H1 (cell line): ENCODE measurements at regions of chr2 and their contacts with region 1.

Region 1: DNA sequence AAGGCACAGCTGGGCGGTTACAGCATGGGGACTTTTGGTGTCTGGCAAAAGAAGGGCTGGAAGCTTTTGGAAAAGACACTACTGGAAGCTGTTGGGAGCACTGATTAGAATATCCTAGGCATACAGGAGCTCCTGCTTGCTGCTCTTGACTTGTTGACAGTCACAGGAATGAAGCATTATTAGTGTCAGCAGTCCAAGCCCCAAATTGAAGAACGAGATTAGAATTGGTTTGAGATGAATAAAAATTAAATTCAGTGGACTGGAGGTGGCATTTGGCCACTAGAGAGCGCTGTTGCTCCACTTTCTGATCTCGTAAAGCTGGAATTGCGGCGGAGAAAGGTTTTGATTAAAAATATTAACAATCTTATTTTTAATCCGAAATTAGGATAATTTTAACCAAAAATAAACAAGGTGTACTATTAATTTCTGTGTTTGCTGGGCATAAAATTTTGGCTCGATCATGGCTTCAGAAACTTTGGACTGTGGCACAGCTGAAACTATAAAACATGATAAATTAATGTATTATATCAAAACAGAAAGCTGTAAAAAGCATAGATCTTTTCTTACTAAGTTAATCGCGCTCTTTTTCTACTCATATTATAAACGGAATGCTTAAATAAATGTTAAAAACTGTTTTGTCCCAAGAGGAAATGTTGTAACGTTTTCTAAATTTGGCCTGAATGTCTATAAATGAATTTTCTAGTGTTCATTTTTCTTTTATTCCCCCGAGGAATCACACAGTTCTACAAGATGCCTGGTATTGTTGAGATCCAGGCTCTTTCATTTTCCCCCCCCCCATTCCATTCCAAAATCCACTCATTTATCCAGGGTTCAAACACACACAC is 2.4 kb upstream of the HOXD8 start:
- DNase-seq: peak in 1 of 2 experiments; percentile 83
- H3K4me3 ChIP-seq: no peak overlapping the region
- H3K27ac ChIP-seq: no peak overlapping the region
- H3K4me1 ChIP-seq: peaks cover 0 to 14% (median 9%) of the 10 kb centered on the region in 4 experiments; a peak in 6 of 7 replicates
- H3K27me3 ChIP-seq: peaks cover 94 to 100% (median 98%) of the 10 kb centered on the region in 4 experiments
- CTCF ChIP-seq: peak; percentile 31 to 74 (median 68)
- EP300 ChIP-seq: no peak
- POLR2A ChIP-seq: no peak
- RAD21 ChIP-seq: peak; percentile 85 to 86

Region 2: GRCh38 chr2:176110975-176111663 is 16.0 kb before region 1 on chr2:
- CTCF ChIA-PET with region 1: interaction called, 42 read pairs
- POLR2A ChIA-PET with region 1: no interaction called
- DNase-seq: peak in 1 of 2 experiments; percentile 84
- H3K4me3 ChIP-seq: no peak overlapping the region
- H3K27ac ChIP-seq: no peak overlapping the region
- H3K4me1 ChIP-seq: peaks cover 0 to 9% (median 2%) of the 10 kb centered on the region in 4 experiments; a peak in 5 of 7 replicates
- H3K27me3 ChIP-seq: peaks cover 95 to 99% (median 98%) of the 10 kb centered on the region in 4 experiments
- CTCF ChIP-seq: peak; percentile 73 to 91 (median 86)
- EP300 ChIP-seq: no peak
- POLR2A ChIP-seq: no peak
- RAD21 ChIP-seq: peak; percentile 29 to 46; a peak in 3 of 4 replicates

Region 3: GRCh38 chr2:176161819-176162626 is 34.9 kb after region 1 on chr2:
- CTCF ChIA-PET with region 1: interaction called, 16 read pairs
- POLR2A ChIA-PET with region 1: no interaction called
- DNase-seq: no peak
- H3K4me3 ChIP-seq: no peak overlapping the region
- H3K27ac ChIP-seq: no peak overlapping the region
- H3K4me1 ChIP-seq: peaks cover 0 to 12% (median 6%) of the 10 kb centered on the region in 4 experiments; a peak in 5 of 7 replicates
- H3K27me3 ChIP-seq: peaks cover 98 to 100% (median 100%) of the 10 kb centered on the region in 4 experiments
- CTCF ChIP-seq: no peak
- EP300 ChIP-seq: no peak
- POLR2A ChIP-seq: no peak
- RAD21 ChIP-seq: no peak

Region 4: GRCh38 chr2:176454893-176455811 is 328.0 kb after region 1 on chr2:
- CTCF ChIA-PET with region 1: interaction called, 26 read pairs
- POLR2A ChIA-PET with region 1: no interaction called
- DNase-seq: peak; percentile 67 to 98
- H3K4me3 ChIP-seq: no peak overlapping the region
- H3K27ac ChIP-seq: no peak overlapping the region
- H3K4me1 ChIP-seq: peaks cover 0 to 14% (median 7%) of the 10 kb centered on the region in 4 experiments; a peak in 5 of 7 replicates
- H3K27me3 ChIP-seq: no peaks in the 10 kb centered on the region
- CTCF ChIP-seq: peak; percentile 57 to 82 (median 79)
- EP300 ChIP-seq: no peak
- POLR2A ChIP-seq: no peak
- RAD21 ChIP-seq: peak; percentile 91 to 94

Region 5: GRCh38 chr2:176638167-176639015 is 511.2 kb after region 1 on chr2:
- CTCF ChIA-PET with region 1: interaction called, 39 read pairs
- POLR2A ChIA-PET with region 1: no interaction called
- DNase-seq: peak in 1 of 2 experiments; percentile 79
- H3K4me3 ChIP-seq: peak overlapping the region; percentile 34 to 68 (median 45)
- H3K27ac ChIP-seq: no peak overlapping the region
- H3K4me1 ChIP-seq: peaks cover 0 to 5% (median 0%) of the 10 kb centered on the region in 4 experiments; a peak in 2 of 7 replicates
- H3K27me3 ChIP-seq: peaks cover 12 to 35% (median 20%) of the 10 kb centered on the region in 4 experiments
- CTCF ChIP-seq: peak; percentile 56 to 79 (median 78)
- EP300 ChIP-seq: no peak
- POLR2A ChIP-seq: no peak
- RAD21 ChIP-seq: peak; percentile 81 to 88